Head of caudate nucleus (tissue), 42 donors: ENCODE measurements at regions of chr14 and their contacts with region 1.

Region 1: GRCh38 chr14:49852301-49853157 is at the start of gene NEMF:
- DNase-seq: peak; percentile 75 to 96 (median 90)

Region 2: GRCh38 chr14:49633640-49634546 is 218.6 kb before region 1 on chr14:
- intact Hi-C with region 1: loop called (anchors 10 kb)
- DNase-seq: peak; percentile 84 to 98 (median 95)

Region 3: DNA sequence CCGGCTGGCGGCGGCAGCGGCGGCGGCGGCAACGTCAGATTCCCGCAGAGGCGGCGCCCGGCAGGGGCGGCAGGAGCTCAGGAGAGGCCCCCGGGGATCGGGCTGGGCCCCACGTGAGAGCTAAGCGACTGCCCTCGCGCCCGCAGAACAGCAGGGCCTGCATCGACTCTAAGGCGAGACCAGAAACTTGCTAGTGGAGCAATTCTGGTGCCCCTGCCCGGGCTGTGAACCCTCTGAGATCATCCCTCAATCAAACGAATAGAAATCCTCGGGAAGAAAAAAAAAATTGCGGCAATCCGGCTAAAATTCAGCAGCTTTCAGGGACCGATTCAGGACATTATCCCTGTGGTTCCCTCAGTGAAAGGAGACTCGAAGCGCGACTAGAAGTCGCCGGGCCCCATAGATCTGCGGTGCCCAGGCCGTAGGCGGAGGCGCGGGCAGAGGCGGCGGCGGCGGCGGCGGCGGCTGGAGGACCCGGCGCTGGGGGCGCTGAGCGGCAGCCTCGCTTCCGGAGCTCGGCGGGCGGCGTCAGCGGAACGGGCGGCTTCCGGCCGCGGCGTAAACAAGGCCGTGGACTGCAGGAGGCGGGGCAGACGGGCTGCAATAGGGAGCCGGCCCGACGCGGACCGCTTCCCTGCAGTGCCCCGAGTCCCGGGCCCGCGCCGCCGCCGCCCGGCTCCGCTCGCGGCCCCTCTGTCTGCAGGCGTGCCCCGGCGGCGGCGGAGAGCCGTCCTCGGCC is 84.8 kb before region 1 on chr14 and contains the start of gene KLHDC2:
- intact Hi-C with region 1: loop called (anchors 10 kb)
- DNase-seq: peak; percentile 59 to 95 (median 90)

Region 4: DNA sequence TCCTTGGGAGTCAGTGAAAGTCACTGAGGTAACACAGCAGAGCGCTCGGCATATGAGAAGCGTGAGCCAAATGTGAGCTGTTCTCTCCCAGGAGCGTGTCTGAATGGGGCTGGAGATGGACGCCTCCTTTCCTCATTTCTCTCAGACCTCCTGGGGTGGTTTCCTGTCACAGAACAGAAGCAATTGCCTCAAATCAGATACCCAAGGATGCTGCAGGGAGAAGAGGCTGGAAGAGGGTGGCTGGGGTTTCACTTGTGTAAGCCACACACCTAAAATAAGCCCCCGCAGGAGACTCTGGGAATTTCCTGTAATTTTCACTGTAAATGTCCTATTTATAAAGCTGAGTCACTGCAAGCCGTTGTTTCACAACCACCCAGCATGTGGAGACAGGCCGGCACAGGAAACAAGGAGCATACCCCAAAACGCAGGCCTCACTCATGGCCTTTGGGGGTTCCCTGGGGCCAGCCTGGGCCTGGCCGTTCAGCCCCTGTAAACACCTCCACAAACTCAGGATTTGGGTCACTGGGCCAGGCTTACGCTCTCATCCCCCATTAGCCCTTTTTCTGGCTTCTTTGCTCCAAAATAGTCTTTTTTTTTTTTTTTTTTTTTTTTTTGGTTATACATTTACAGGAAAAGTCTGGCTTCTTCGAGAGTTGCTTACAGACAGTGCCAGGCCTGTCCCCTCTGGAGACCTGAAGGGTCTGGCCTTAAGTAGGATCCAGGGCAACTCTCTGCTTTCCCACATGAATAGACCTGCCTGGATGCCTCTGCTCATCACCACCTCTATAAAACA is 208.5 kb after region 1 on chr14:
- intact Hi-C with region 1: no loop called
- DNase-seq: peak in 31 of 42 donors; percentile 13 to 83 (median 50)